ENCODE measurements at regions of chr5 and their contacts with region 1.

Region 1: DNA sequence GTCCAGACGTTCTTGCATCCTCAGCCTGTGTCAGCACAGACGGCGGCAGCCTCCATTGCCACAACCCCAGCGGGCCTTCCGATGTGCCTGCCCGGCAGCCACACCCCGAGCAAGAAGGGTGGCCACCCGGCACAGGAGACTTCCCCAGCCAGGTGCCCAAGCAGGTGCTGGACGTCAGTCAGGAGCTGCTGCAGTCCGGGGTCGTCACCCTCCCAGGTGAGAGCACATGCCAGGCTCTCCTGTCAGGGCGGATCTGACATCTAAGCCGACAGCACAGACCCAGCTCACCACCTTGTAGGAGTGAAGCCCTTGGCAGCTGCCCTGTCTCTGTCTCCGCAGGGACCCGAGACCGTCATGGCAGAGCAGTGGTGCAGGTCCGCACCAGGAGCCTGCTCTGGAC is 48.3 kb upstream of the LRRC14B start:
- DNase-seq: no peak
- H3K4me3 ChIP-seq: no peak overlapping the region
- H3K27ac ChIP-seq: no peak overlapping the region
- H3K4me1 ChIP-seq: no peaks in the 10 kb centered on the region
- H3K27me3 ChIP-seq: peaks cover 82% of the 10 kb centered on the region
- CTCF ChIP-seq: no peak

Region 2: GRCh38 chr5:78004-78804 is 64.8 kb before region 1 on chr5:
- CTCF ChIA-PET with region 1: no interaction called
- POLR2A ChIA-PET with region 1: no interaction called
- intact Hi-C with region 1: no loop called
- DNase-seq: peak in 1 of 2 experiments; percentile 76
- H3K4me3 ChIP-seq: no peak overlapping the region
- H3K27ac ChIP-seq: no peak overlapping the region
- H3K4me1 ChIP-seq: no peaks in the 10 kb centered on the region
- H3K27me3 ChIP-seq: peaks cover 99% of the 10 kb centered on the region
- CTCF ChIP-seq: peak; percentile 65

Region 3: DNA sequence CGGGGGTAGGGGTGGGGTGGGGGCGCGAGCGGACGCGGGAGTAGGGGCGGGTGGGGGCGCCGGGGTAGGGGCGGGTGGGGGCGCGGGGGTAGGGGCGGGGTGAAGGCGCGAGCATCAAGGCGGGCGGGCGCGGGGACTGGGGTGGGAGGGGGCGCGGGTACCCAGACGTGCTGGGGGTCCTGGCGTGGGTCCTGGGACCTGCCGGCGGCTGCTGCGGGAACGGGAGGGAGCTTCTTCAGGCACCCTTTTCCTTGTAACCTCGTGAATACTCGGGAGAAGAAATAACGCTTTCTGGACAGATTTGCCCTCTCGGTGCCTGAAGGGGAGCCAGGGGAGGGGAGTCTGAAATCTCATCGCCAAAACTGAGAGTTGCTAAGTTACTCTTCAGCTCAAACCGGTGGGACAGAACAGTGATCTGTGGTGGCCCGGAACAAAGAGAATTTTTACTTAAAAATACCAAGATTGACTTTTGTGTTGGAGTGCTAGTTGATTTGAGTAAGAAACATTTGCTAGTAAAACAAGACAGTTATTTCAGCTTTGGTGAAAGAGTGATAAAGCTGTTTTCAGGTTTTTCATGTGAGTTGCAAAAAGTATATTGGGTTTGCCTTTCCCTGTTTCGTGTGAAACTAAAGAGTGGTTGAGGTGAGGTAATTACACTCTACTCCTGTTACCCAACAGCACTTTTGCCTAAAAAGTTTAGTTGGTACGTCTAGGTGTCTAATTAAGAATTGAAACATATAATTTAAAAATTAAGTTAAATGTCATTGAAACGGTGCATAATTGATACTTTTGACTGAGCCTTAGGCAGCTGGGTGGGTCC is 50.4 kb before region 1 on chr5:
- CTCF ChIA-PET with region 1: no interaction called
- POLR2A ChIA-PET with region 1: interaction called, 10 read pairs
- intact Hi-C with region 1: loop called (anchors 1 kb)
- DNase-seq: no peak
- H3K4me3 ChIP-seq: no peak overlapping the region
- H3K27ac ChIP-seq: no peak overlapping the region
- H3K4me1 ChIP-seq: no peaks in the 10 kb centered on the region
- H3K27me3 ChIP-seq: peaks cover 94% of the 10 kb centered on the region
- CTCF ChIP-seq: no peak

Region 4: GRCh38 chr5:106587-106986 is 36.5 kb before region 1 on chr5:
- CTCF ChIA-PET with region 1: no interaction called
- POLR2A ChIA-PET with region 1: no interaction called
- intact Hi-C with region 1: no loop called
- DNase-seq: no peak
- H3K4me3 ChIP-seq: no peak overlapping the region
- H3K27ac ChIP-seq: no peak overlapping the region
- H3K4me1 ChIP-seq: no peaks in the 10 kb centered on the region
- H3K27me3 ChIP-seq: peaks cover 72% of the 10 kb centered on the region
- CTCF ChIP-seq: no peak

Region 5: DNA sequence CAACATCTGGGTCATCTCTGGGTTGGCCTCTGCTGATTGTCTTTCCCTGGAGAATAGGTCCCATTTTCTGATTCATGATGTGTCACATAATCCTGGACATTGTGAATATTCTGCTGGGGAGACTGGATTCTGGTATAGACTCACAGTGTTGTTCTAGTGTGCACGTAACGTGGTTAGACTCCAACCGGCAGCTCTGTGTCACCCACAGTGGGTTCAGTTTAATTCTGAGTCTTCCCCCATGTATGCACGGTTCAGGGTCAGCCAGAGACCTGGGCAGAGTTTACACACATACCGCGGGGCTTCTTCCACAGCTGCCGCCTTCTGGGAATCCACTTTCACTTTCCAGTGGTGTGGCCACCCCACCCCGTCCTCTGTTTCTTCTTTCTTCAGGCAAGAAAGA is 10.2 kb after region 1 on chr5:
- CTCF ChIA-PET with region 1: interaction called, 4 read pairs
- POLR2A ChIA-PET with region 1: interaction called, 14 read pairs
- intact Hi-C with region 1: no loop called
- DNase-seq: no peak
- H3K4me3 ChIP-seq: no peak overlapping the region
- H3K27ac ChIP-seq: no peak overlapping the region
- H3K4me1 ChIP-seq: no peaks in the 10 kb centered on the region
- H3K27me3 ChIP-seq: peaks cover 88% of the 10 kb centered on the region
- CTCF ChIP-seq: no peak